PC-3 (cell line): ENCODE measurements at regions of chr12 and their contacts with region 1.

Region 1: GRCh38 chr12:1851151-1851701 is 30.9 kb downstream of the LRTM2 start:
- DNase-seq: peak; percentile 84
- ATAC-seq: peak; percentile 78
- H3K4me3 ChIP-seq: no peak overlapping the region
- H3K27ac ChIP-seq: peak overlapping the region; percentile 50
- H3K4me1 ChIP-seq: no peaks in the 10 kb centered on the region
- H3K27me3 ChIP-seq: peaks cover 17% of the 10 kb centered on the region
- CTCF ChIP-seq: no peak

Region 2: GRCh38 chr12:1870998-1871917 is 20.0 kb after region 1 on chr12:
- CTCF ChIA-PET with region 1: no interaction called
- POLR2A ChIA-PET with region 1: interaction called, 19 read pairs
- intact Hi-C with region 1: no loop called
- DNase-seq: no peak
- ATAC-seq: no peak
- H3K4me3 ChIP-seq: no peak overlapping the region
- H3K27ac ChIP-seq: no peak overlapping the region
- H3K4me1 ChIP-seq: no peaks in the 10 kb centered on the region
- H3K27me3 ChIP-seq: peaks cover 77% of the 10 kb centered on the region
- CTCF ChIP-seq: no peak

Region 3: GRCh38 chr12:2691006-2691344 is 839.7 kb after region 1 on chr12:
- CTCF ChIA-PET with region 1: no interaction called
- POLR2A ChIA-PET with region 1: no interaction called
- intact Hi-C with region 1: no loop called
- DNase-seq: no peak
- ATAC-seq: no peak
- H3K4me3 ChIP-seq: no peak overlapping the region
- H3K27ac ChIP-seq: no peak overlapping the region
- H3K4me1 ChIP-seq: no peaks in the 10 kb centered on the region
- H3K27me3 ChIP-seq: peaks cover 78% of the 10 kb centered on the region
- CTCF ChIP-seq: no peak